PC-3 (cell line): ENCODE measurements at regions of chr16 and their contacts with region 1.

Region 1: DNA sequence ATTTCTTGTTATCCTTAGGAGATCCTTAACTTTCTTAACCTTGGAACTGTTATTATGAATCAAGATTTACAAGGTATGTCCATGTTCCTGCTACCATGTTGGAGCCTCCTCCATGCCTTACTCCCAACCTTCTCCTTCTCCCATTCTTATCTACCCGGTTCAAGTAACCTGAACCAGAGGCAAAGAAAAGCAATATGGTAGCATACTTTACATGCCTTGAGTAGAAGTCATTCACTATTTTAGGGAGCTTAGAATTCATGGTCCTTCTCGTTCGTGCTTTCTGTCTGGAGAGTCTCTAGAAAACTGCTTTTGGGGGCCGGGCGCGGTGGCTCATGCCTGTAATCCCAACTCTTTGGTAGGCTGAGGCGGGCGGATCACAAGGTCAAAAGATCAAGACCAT is 37.7 kb downstream of the LDHD start:
- DNase-seq: no peak
- ATAC-seq: no peak
- H3K4me3 ChIP-seq: no peak overlapping the region
- H3K27ac ChIP-seq: no peak overlapping the region
- H3K4me1 ChIP-seq: no peaks in the 10 kb centered on the region
- H3K27me3 ChIP-seq: no peaks in the 10 kb centered on the region
- CTCF ChIP-seq: no peak

Region 2: DNA sequence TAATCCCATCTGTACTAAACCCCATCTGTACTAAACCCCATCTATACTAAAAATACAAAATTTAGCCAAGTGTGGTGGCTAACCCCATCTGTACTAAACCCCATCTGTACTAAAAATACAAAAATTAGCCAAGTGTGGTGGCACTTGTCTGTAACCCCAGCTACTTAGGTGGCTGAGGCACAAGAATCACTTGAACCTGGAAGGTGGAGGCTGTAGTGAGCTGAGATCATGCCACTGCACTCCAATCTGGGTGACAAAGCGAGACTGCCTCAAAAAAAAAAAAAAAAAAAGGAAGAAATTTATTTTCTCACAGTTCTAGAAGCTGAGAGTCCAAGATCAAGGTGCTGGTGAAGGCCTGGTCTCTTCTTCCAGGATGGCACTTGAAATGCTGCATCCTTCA is 81.5 kb after region 1 on chr16:
- CTCF ChIA-PET with region 1: interaction called, 10 read pairs
- POLR2A ChIA-PET with region 1: no interaction called
- intact Hi-C with region 1: no loop called
- DNase-seq: no peak
- ATAC-seq: no peak
- H3K4me3 ChIP-seq: no peak overlapping the region
- H3K27ac ChIP-seq: no peak overlapping the region
- H3K4me1 ChIP-seq: no peaks in the 10 kb centered on the region
- H3K27me3 ChIP-seq: no peaks in the 10 kb centered on the region
- CTCF ChIP-seq: no peak

Region 3: DNA sequence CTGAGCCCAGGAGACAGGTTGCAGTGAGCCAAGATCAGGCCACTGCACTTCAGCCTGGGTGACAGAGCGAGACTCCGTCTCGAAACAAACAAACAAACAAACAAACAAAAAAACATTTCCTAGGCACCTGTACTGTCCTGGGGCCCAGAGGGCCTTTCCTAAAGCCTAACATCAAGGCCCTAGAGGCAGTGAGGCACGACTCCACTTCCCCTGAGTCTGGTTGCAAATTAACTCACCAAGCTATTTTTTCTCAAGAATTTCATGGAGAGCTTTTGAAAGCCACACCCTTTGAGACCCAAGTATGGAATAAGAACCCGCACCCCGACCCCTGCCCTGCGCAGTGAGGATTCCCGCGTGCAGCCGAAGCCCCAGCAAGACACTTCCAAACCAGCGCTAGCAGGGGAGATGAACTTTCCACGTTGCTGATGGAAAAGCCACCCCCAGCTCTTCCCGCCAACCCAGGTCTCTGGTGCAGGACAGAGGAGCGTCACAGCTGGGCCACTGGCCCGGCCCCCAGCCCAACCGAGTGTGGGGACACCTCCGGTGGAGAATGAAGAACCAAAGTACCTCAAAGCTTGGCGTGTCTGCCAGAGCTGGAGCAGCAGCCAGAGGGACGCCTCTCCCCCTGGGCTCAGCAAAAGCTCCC is 455.8 kb after region 1 on chr16:
- CTCF ChIA-PET with region 1: no interaction called
- POLR2A ChIA-PET with region 1: no interaction called
- intact Hi-C with region 1: no loop called
- DNase-seq: no peak
- ATAC-seq: no peak
- H3K4me3 ChIP-seq: no peak overlapping the region
- H3K27ac ChIP-seq: no peak overlapping the region
- H3K4me1 ChIP-seq: no peaks in the 10 kb centered on the region
- H3K27me3 ChIP-seq: no peaks in the 10 kb centered on the region
- CTCF ChIP-seq: no peak